Left ventricle myocardium inferior (tissue), 1 donor: ENCODE measurements at regions of chrX and their contacts with region 1.

Region 1: DNA sequence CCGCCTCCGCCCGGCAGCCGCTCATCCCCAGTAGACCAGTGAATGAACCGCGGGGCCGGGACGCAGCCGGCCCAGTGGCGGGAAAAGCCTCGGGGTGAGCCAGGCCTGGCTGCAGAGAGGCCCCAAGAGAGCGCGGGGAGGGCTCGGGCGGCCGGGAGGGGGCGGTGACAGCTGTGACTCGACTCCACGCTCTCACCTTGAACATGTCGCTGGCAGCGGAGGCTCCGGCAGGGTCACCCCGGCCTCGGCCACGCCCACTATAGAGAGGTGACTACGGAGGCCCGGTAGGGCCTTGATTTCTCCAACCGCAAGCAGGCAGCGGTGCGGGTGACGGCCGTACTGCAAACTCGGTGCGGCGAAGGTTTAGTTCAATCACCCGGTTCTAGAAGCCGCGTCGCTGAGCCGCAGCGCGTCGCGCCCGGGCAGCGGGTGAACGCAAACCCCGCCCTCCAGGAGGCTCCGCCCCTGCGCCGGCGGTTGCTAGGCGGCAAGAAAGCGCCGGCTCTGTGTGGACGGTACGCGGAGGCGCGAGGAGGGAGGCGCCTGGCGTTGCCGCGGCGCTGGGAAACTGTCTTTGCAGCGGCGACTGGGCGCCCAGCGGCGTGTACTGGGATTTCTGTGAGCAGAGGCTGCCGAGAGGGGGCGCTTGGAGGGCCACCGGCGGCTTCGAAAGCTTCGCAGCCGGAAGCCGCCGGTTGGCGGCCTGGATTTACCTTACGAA is at the starts of genes APOO and CXorf58:
- DNase-seq: peak; percentile 90
- H3K4me3 ChIP-seq: peak within 1 kb of the TSS; percentile 75
- H3K27ac ChIP-seq: peak within 1 kb of the TSS; percentile 92
- H3K4me1 ChIP-seq: peaks cover 16% of the 10 kb centered on the region
- H3K27me3 ChIP-seq: no peaks in the 10 kb centered on the region
- CTCF ChIP-seq: peak; percentile 83
- total RNA-seq, gene APOO: 102 TPM
- total RNA-seq, gene CXorf58: 0.49 TPM

Region 2: DNA sequence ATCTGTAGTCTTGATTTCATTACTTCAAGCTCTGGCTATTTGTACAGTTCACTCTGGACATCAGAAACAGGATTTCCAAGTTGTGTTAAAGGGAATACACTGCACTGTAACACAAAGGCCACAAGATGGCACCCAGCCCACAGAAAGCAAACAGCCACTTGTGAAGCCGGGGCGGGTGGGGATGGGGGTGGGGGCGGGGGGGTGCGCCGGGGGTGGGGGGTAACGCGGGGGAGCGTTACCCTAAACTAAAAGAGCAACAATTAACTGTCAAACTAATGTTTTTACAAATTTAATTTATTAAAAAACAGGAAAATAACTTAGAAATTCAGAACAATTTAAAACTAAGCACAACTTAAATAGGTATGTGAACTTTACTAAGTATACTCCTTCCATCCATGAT is 213.1 kb before region 1 on chrX:
- intact Hi-C with region 1: loop called (anchors 10 kb)
- DNase-seq: peak; percentile 24
- H3K4me3 ChIP-seq: no peak overlapping the region
- H3K27ac ChIP-seq: no peak overlapping the region
- H3K4me1 ChIP-seq: peaks cover 3% of the 10 kb centered on the region
- H3K27me3 ChIP-seq: no peaks in the 10 kb centered on the region
- CTCF ChIP-seq: peak; percentile 61

Region 3: DNA sequence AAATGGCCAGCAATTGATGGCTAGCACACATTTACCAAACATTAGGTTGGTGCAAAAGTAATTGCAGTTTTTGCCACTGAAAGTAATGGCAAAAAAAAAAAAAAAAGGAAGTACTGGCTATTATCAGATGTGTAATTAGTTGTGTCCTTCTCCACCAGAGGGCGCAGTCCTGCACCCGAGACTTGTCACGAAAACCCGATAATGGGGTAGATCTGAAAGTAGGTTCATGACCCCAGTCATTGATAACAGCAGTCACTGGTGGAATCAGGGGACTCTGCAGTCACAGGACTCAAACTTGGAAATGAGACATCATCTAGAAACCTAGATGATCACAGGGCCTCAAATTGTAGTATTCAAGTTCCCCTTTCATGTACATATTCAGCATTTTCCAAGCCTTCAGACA is 151.5 kb before region 1 on chrX:
- intact Hi-C with region 1: loop called (anchors 10 kb)
- DNase-seq: peak; percentile 27
- H3K4me3 ChIP-seq: no peak overlapping the region
- H3K27ac ChIP-seq: no peak overlapping the region
- H3K4me1 ChIP-seq: no peaks in the 10 kb centered on the region
- H3K27me3 ChIP-seq: no peaks in the 10 kb centered on the region
- CTCF ChIP-seq: peak; percentile 60

Region 4: GRCh38 chrX:24117258-24117657 is 209.6 kb after region 1 on chrX:
- intact Hi-C with region 1: no loop called
- DNase-seq: no peak
- H3K4me3 ChIP-seq: peak overlapping the region; percentile 29
- H3K27ac ChIP-seq: peak overlapping the region; percentile 61
- H3K4me1 ChIP-seq: no peaks in the 10 kb centered on the region
- H3K27me3 ChIP-seq: no peaks in the 10 kb centered on the region
- CTCF ChIP-seq: no peak